ENCODE measurements at regions of chr6 and their contacts with region 1.

Region 1: DNA sequence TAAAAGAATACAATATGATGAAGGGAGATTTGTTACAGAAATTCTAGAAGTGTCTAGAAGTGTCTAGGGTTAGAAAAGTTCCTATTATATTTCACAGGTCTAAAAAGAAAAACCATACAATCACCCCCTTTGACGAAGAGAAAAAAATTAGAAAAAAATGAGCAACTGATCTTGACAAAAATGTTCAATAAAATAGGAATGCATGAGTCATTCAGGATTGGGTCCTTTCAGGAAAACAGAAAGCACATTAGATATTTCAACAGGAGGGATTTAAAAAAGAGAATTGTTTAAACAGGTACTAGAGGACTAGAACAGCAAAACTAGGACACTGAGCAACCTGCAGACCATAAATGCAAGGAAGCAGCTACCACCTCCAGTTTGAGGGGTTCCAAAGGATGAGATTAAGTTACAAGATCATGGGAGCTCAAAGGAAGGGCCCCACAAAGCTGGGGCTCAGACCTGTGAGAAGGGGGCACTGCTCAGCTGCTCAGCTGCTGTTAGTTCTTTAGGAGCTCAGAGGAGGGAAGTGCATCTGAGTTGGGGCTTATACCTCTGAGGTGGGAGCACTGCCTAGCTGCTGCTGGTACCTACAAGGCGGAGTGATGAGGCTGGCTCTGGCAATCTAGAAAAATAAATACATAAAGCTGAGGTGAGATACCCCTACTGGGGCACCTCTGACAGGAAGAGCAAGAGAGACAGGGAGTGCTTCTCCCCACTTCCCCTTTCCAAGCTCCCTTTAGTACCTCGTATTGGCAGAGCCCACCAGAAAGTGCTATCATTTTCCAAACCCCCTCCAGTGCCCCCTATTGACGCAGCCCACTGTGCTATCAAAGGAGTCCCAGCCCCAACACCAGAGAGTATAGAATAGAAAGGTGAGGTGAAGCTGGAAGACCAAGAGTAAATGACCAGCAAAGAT is 27.1 kb upstream of the BEND6 start:
- DNase-seq: no peak
- H3K4me3 ChIP-seq: no peak overlapping the region
- H3K27ac ChIP-seq: no peak overlapping the region
- H3K4me1 ChIP-seq: no peaks in the 10 kb centered on the region
- H3K27me3 ChIP-seq: no peaks in the 10 kb centered on the region
- CTCF ChIP-seq: no peak
- EP300 ChIP-seq: no peak
- POLR2A ChIP-seq: no peak

Region 2: DNA sequence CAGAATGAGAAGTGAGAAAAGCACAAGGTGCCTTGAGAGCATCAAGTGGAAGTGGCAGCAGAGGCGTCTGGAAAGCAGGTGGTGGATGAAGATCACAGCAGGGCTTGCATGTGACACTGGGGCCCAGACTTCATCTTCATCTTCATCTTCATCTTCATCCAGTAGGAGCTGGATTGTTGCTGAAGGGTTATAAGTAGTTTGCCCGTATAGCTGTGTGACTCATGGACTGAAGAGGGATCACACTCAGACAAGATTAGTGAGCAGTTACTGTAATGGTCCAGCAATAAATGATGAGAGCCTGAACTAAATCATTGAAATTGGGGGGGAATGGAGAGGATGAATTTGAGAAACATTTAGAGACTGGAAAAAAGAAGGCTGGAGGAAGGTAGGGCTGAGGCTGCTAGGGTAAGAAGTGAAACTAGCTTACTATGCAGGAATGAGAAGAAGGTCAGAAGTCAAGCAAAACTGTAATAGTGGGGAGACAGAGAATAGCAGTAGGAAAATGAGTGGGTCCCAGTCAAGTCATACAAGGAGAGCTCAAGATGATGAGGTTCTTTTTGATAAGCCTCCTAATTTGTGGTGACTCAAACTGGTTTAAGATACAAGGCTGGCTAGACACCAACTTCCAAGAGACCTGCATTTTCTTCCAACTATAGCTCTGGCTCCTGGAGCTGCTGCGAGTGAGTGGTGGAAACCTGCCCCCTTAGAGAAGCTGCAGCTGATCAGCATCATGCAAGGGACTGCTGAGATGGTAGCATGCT is 65.2 kb before region 1 on chr6:
- intact Hi-C with region 1: loop called in 1 of 4 experiments (anchors 2 kb)
- DNase-seq: no peak
- H3K4me3 ChIP-seq: no peak overlapping the region
- H3K27ac ChIP-seq: no peak overlapping the region
- H3K4me1 ChIP-seq: no peaks in the 10 kb centered on the region
- H3K27me3 ChIP-seq: no peaks in the 10 kb centered on the region
- CTCF ChIP-seq: no peak
- EP300 ChIP-seq: no peak
- POLR2A ChIP-seq: no peak

Region 3: GRCh38 chr6:56875523-56875922 is 52.3 kb before region 1 on chr6:
- intact Hi-C with region 1: no loop called
- DNase-seq: no peak
- H3K4me3 ChIP-seq: no peak overlapping the region
- H3K27ac ChIP-seq: no peak overlapping the region
- H3K4me1 ChIP-seq: no peaks in the 10 kb centered on the region
- H3K27me3 ChIP-seq: no peaks in the 10 kb centered on the region
- CTCF ChIP-seq: no peak
- EP300 ChIP-seq: no peak
- POLR2A ChIP-seq: no peak

Region 4: GRCh38 chr6:56946368-56946767 is 18.6 kb after region 1 on chr6:
- intact Hi-C with region 1: loop called in 1 of 4 experiments (anchors 1 kb)
- DNase-seq: no peak
- H3K4me3 ChIP-seq: no peak overlapping the region
- H3K27ac ChIP-seq: no peak overlapping the region
- H3K4me1 ChIP-seq: no peaks in the 10 kb centered on the region
- H3K27me3 ChIP-seq: no peaks in the 10 kb centered on the region
- CTCF ChIP-seq: no peak
- EP300 ChIP-seq: no peak
- POLR2A ChIP-seq: no peak